Breast epithelium (tissue), 4 donors: ENCODE measurements at regions of chr5 and their contacts with region 1.

Region 1: GRCh38 chr5:146218168-146218567 is 14.8 kb downstream of the RBM27 start:
- DNase-seq: no peak
- H3K4me3 ChIP-seq: no peak overlapping the region
- H3K27ac ChIP-seq: no peak overlapping the region
- H3K4me1 ChIP-seq: no peaks in the 10 kb centered on the region
- H3K27me3 ChIP-seq: no peaks in the 10 kb centered on the region
- CTCF ChIP-seq: no peak
- POLR2A ChIP-seq: no peak

Region 2: GRCh38 chr5:146794326-146795029 is 576.3 kb after region 1 on chr5:
- intact Hi-C with region 1: loop called (anchors 5 kb)
- DNase-seq: no peak
- H3K4me3 ChIP-seq: no peak overlapping the region
- H3K27ac ChIP-seq: no peak overlapping the region
- H3K4me1 ChIP-seq: no peaks in the 10 kb centered on the region
- H3K27me3 ChIP-seq: no peaks in the 10 kb centered on the region
- CTCF ChIP-seq: no peak
- POLR2A ChIP-seq: no peak